Left cardiac atrium (tissue), 4 donors: ENCODE measurements at regions of chr15 and their contacts with region 1.

Region 1: DNA sequence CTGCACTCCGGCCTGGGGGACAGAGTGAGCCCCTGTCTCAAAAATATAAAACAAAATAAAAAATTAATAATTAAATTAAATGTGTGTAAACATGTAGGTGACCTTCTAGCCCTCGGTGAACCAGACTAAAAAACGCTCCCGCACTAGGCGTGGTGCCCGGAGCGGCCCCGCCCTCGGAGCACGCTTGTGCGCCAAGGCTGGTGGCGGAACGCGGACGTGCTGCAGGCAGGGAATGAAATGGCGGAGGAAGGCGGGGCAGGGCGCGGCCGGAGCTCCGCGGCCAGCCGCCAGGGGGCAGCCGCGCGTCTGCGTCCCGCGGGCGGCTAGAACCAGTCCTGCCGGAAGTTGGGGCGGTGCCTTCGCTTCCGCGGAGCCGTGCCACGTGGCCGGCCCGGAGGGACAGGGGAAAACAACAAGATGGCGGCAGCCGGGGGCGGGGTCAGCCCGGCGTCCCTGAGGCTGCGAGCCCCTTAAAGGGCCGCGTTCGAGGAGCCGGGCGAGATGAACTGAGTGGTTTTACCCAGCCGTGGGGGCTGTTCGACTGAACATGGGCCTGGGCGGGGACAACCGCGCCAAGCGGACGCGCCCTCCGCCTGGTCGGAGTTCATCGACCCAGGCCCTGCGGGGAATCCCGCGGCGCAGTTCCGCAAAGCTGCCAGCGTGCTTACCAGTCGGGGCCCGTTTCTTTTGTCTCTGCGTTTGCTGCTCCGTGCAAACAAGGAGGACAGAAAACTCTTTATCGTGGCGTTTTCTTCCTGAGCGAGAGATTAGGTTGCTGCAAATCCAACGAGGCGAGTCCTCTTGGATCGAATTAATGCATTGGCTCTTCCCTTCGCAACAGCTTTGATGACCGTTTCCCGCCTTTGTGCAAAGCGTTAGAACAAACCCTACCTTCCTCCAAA is 90.9 kb upstream of the CHD2 start:
- DNase-seq: peak; percentile 99
- ATAC-seq: peak; percentile 91

Region 2: GRCh38 chr15:92903941-92904831 is 95.0 kb after region 1 on chr15:
- intact Hi-C with region 1: loop called in 1 of 2 experiments (anchors 1 kb)
- DNase-seq: peak; percentile 98
- ATAC-seq: peak; percentile 94 to 95

Region 3: DNA sequence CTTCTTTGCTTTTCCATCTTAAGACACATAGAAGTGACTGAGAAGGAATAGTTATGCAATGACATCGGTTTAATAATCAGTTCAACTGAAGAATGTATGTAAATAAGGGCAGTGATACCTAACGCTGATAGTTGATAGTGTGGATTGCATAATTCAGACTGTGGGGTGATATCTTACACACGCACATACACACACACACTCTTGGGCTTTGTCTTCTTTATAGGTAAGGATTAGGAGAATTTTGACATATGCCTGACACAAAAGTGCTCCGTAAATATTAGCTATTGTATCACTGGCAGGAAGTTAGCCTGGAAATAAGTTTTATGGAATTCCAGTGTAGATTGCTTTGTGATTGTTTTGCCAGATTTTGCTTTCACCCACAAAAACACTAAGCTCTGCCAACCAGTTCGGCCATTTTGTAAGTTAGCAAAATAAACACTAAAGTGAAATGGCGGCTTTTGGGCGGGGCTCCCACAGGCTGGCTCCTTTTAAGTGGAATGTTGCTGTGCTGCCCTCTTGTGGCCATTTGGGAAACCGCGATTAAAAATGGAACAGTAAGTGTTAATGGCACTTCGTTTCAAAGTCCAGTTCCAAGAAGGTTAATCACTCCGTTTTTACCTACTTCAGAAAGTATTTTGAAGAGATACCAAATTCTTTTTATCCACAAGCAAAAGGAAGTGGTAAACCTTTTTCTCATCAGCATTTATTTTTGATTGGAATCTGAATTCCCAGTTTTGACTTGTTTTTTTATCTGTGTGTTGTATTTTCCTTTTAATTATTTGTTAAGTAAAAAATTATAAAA is 108.6 kb after region 1 on chr15:
- intact Hi-C with region 1: loop called (anchors 2 kb)
- DNase-seq: peak; percentile 96
- ATAC-seq: peak; percentile 57 to 79